Activated CD4-positive, alpha-beta T cell treated with anti-CD3 and anti-CD28 coated beads for 36 hours (primary cell): ENCODE measurements at regions of chr9 and their contacts with region 1.

Region 1: DNA sequence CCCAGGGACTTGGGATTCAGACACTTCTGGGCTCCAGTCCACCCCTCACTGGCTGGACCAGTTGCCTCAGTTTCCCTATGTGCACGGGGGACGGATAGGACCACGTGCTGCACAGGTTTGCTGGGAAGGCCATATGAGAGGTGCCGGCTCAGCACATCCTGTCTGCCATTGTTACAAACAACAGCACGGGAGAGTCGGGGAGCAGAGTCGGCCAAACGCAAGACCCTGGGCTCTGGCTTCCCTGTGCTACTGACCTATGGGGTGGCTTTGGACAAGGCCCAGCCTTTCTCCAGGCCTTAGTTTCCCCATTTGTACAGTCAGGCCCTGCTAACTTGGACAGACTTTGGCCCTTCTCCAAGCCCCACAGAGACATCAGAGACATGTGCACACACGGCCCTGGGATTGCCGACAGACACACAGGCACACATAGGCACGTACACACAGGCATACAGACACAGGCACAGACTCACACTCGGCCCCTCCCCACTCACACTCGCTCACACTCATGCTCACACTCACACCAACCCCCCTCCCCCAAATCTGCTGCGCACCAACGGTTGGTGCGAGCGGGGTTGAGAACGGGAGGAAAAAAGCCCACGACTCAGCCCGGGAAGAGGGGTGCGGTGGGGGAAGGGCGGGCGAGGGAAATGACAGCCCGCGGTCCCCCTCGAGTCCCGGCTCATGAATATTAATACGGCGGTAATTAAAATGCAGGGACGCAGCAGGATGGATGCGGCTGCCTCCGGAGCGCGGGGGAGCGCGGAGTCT is 133.1 kb downstream of the C9orf50 start:
- DNase-seq: peak; percentile 76
- ATAC-seq: peak; percentile 34
- H3K4me3 Mint-ChIP-seq: peak overlapping the region; percentile 93
- H3K27ac Mint-ChIP-seq: peak overlapping the region; percentile 96
- H3K4me1 Mint-ChIP-seq: peaks cover 66% of the 10 kb centered on the region
- H3K27me3 Mint-ChIP-seq: no peaks in the 10 kb centered on the region

Region 2: GRCh38 chr9:129258124-129258822 is 229.6 kb before region 1 on chr9:
- CTCF ChIA-PET with region 1: no interaction called
- POLR2A ChIA-PET with region 1: no interaction called
- intact Hi-C with region 1: loop called in 1 of 2 experiments (anchors 1 kb)
- DNase-seq: peak; percentile 96
- ATAC-seq: peak; percentile 96
- H3K4me3 Mint-ChIP-seq: peak overlapping the region; percentile 61
- H3K27ac Mint-ChIP-seq: no peak overlapping the region
- H3K4me1 Mint-ChIP-seq: peaks cover 27% of the 10 kb centered on the region
- H3K27me3 Mint-ChIP-seq: peaks cover 15% of the 10 kb centered on the region

Region 3: DNA sequence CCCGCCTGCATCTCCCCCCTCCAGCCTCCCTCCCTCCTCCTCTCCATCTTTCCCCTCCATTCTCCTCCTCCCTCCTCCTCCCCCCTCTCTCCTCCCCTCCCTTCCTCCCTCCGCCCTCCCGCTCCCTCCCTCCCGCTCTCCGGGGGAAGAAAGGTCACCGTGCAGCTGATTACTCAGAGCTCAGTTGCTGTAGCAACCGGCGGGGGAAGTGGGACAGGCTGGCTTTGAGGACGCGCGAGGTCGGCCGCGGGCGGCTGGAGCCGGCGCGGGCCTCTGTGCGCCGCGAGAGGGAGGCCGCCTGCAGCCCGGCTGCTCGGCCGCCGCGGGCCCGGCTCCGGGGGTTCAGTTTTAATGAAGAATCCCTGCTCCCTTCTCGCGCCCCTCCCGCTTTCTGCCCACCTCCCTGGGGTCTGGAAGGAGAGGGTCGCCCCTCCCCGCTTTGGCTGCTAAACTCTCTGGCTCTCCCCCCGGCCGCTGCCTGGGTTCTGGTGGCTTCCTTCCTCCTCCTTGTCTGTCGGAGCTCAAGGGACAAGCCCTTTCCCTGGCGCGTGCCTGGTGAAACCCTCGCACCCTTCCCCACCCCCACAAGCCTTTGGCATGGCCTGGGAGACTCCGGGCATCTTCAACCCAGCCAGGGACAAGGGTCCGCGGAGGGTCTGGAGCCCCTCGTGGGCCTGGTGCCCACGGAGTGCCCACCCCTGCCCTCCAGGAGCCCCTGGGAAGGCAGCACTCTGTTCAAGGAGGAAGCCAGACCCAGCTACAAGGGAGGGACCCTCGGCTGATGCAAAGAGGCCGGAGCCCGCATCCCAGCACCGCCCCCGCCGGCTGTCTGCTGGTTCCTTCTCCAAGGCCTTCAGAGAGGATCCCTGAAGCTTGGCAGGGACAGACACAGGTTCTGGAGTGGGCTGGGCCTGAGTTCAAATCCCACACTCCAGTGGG is 27.2 kb before region 1 on chr9:
- CTCF ChIA-PET with region 1: interaction called, 5 read pairs
- POLR2A ChIA-PET with region 1: interaction called, 5 read pairs
- intact Hi-C with region 1: loop called (anchors 1 to 2 kb)
- DNase-seq: peak; percentile 96
- ATAC-seq: peak; percentile 87
- H3K4me3 Mint-ChIP-seq: peak overlapping the region; percentile 72
- H3K27ac Mint-ChIP-seq: peak overlapping the region; percentile 92
- H3K4me1 Mint-ChIP-seq: peaks cover 38% of the 10 kb centered on the region
- H3K27me3 Mint-ChIP-seq: no peaks in the 10 kb centered on the region

Region 4: DNA sequence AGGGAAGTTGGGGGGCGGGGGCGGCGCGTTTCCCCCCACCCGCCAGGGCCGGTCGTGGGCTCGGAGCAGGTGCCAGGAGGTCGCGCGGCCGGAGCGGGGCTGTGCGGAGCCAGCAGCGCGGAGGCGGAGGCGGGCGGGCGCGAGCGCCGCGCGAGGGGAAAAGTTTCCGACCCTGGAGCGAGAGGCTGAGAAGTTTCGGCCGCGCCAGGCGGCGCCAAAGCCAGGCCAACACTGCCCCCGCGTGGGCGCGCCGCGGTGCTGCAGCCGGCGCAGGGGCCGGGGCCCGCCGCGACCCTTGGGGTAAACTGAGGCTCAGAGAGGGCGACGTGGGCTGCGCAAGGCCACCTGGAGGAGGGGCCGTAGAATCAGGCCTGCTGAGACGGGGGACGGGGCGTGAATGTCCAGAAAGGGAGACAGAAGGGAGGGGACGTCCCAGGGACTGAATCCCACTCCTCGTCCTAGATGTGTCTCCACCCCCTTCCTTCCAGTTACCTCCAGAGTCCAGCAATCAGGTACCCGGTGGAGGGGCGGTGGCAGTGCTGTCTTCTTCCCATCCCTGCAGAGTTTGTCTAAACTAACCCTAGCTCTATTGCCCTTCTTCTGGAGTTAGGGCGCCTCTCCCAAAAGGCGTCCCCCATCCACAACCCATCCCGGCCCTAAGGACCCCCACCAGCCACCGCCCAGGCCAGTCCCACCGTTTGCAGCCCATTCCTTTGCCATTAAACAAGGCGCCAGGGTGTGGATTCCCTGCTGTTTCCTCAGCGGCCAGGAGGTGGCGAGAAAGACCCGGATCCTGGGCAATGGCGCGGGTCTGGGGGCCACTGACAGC is 122.9 kb after region 1 on chr9:
- CTCF ChIA-PET with region 1: interaction called, 5 read pairs
- POLR2A ChIA-PET with region 1: no interaction called
- intact Hi-C with region 1: loop called (anchors 1 to 10 kb)
- DNase-seq: peak; percentile 85
- ATAC-seq: peak; percentile 63
- H3K4me3 Mint-ChIP-seq: peak overlapping the region; percentile 73
- H3K27ac Mint-ChIP-seq: peak overlapping the region; percentile 47
- H3K4me1 Mint-ChIP-seq: peaks cover 29% of the 10 kb centered on the region
- H3K27me3 Mint-ChIP-seq: no peaks in the 10 kb centered on the region